ENCODE measurements at regions of chr3 and their contacts with region 1.

Region 1: GRCh38 chr3:33372218-33373081 is 67.8 kb downstream of the UBP1 start:
- DNase-seq: peak; percentile 84
- ATAC-seq: peak; percentile 88
- H3K4me3 ChIP-seq: peak overlapping the region; percentile 25; the same call in 1 of the 2 replicates
- H3K27ac ChIP-seq: peak overlapping the region; percentile 6; the same call in 1 of the 2 replicates
- H3K4me1 ChIP-seq: peaks cover 10% of the 10 kb centered on the region
- H3K27me3 ChIP-seq: no peaks in the 10 kb centered on the region
- CTCF ChIP-seq: peak; percentile 99

Region 2: DNA sequence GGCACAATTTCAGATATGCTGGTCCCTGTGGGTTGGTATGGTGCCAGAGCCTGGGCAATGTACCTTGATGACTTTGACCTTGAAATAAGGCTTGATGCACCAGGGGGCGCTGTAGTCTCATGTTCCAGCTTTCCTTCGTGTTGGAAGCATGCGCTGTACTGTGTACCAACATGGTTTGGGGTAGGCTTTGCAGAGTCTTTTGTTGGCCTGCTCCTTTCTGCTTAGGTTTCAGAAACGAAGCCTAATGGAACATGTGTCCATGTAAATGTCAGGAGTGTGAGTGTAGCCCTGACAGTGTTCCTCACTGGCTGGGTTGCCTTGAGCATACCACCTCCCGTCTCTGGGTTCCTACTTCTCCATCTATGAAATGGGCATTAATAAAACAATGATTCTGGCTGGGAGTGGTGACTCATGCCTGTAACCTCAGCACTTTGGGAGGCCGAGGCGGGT is 424.6 kb before region 1 on chr3:
- CTCF ChIA-PET with region 1: interaction called, 6 read pairs
- POLR2A ChIA-PET with region 1: no interaction called
- intact Hi-C with region 1: loop called (anchors 5 kb)
- DNase-seq: peak; percentile 97
- ATAC-seq: peak; percentile 83
- H3K4me3 ChIP-seq: no peak overlapping the region
- H3K27ac ChIP-seq: no peak overlapping the region
- H3K4me1 ChIP-seq: 0 out of 2 replicates have a peak, but pooled peaks cover 6% of the 10 kb centered on the region
- H3K27me3 ChIP-seq: no peaks in the 10 kb centered on the region
- CTCF ChIP-seq: peak; percentile 94

Region 3: GRCh38 chr3:33146791-33147445 is 225.5 kb before region 1 on chr3:
- CTCF ChIA-PET with region 1: interaction called, 3 read pairs
- POLR2A ChIA-PET with region 1: no interaction called
- intact Hi-C with region 1: loop called (anchors 5 kb)
- DNase-seq: peak; percentile 39
- ATAC-seq: peak; percentile 40
- H3K4me3 ChIP-seq: no peak overlapping the region
- H3K27ac ChIP-seq: no peak overlapping the region
- H3K4me1 ChIP-seq: no peaks in the 10 kb centered on the region
- H3K27me3 ChIP-seq: no peaks in the 10 kb centered on the region
- CTCF ChIP-seq: no peak

Region 4: GRCh38 chr3:33299395-33300081 is 72.9 kb before region 1 on chr3:
- CTCF ChIA-PET with region 1: interaction called, 11 read pairs
- POLR2A ChIA-PET with region 1: no interaction called
- intact Hi-C with region 1: no loop called
- DNase-seq: peak; percentile 80
- ATAC-seq: peak; percentile 71
- H3K4me3 ChIP-seq: no peak overlapping the region
- H3K27ac ChIP-seq: peak overlapping the region; percentile 80
- H3K4me1 ChIP-seq: peaks cover 17% of the 10 kb centered on the region
- H3K27me3 ChIP-seq: no peaks in the 10 kb centered on the region
- CTCF ChIP-seq: no peak

Region 5: GRCh38 chr3:33360136-33360825 is 12.2 kb before region 1 on chr3:
- CTCF ChIA-PET with region 1: interaction called, 10 read pairs
- POLR2A ChIA-PET with region 1: no interaction called
- intact Hi-C with region 1: no loop called
- DNase-seq: peak; percentile 95
- ATAC-seq: peak; percentile 89
- H3K4me3 ChIP-seq: peak overlapping the region; percentile 55
- H3K27ac ChIP-seq: peak overlapping the region; percentile 97
- H3K4me1 ChIP-seq: peaks cover 69% of the 10 kb centered on the region
- H3K27me3 ChIP-seq: no peaks in the 10 kb centered on the region
- CTCF ChIP-seq: no peak

Region 6: DNA sequence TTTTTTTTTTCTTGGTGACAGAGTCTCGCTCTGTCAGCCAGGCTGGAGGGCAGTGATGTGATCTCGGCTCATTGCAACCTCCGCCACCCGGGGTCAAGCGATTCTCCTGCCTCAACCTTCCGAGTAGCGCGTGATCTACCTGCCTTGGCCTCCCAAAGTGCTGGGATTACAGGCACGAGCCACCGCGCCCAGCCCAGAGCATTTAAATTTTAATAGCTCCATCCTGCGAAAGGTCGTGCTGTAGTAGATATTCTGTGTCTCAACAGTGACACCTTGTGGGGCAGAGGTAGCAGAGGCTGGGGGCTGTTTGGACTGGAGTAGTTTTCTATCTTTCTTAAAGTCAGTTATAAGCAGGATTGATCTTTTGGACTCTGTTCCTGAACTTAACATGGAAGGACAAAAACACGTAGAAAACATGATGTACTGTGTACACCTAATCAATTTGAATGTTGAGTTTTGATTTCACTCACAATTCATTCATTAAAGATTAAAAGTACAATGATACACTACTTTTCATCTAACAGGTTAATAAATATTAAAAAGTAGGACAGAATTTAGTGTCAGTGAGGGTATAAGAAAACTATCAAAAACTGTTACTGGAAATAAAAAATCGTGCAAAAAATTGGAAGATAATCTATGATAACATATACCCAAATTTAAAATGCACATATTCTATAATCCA is 415.0 kb after region 1 on chr3:
- CTCF ChIA-PET with region 1: interaction called, 4 read pairs
- POLR2A ChIA-PET with region 1: interaction called, 3 read pairs
- intact Hi-C with region 1: loop called (anchors 2 kb)
- DNase-seq: peak; percentile 84
- ATAC-seq: peak; percentile 81
- H3K4me3 ChIP-seq: peak overlapping the region; percentile 39; the same call in 1 of the 2 replicates
- H3K27ac ChIP-seq: no peak overlapping the region
- H3K4me1 ChIP-seq: peaks cover 30% of the 10 kb centered on the region
- H3K27me3 ChIP-seq: no peaks in the 10 kb centered on the region
- CTCF ChIP-seq: peak; percentile 91

Measured in PC-3 (cell line).